Activated CD4-positive, alpha-beta memory T cell treated with anti-CD3 and anti-CD28 coated beads, Interleukin-2, amount 10 ng/mL, durations not matched to agents 7 days and 5 days (primary cell): ENCODE measurements at regions of chr4 and their contacts with region 1.

Region 1: DNA sequence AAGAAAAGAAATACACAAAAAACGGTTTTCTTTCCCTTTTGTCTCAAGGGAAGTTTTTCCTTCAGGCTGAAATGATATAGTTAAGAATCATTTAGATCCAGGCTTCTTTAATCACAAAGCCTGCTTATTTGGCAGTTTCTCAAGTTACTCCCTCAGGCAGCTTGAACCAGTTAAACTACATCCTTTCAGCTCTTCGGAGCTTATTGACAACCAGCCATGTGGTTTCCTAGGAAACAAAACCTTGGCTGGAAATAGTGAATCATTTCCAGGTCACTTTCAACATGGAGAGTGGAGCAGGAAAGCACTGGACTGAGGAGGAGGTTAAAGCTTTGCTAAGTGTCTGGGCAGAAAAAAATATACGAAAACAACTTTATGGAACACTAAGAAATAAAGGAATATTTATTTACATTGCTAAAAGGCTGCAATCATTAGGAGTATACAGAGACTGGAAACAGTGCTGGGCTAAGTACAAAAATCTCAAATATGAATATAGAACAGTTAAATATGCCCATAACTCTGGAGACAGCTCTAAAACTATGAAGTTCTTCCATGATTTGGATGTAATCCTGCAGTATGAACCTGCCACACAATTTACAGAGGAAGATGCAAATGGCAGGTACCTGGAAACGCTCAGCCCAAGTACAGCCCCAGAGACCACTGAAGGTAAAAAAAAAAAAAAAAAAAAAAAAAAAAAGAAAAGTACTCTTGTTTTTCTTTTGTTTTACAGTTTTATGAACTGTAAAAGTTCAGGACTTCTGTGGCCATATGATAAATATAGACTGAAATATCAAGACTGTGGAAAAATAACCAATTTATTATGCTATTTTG is 23.2 kb upstream of the AASDH start:
- DNase-seq: no peak
- H3K4me3 Mint-ChIP-seq: no peak overlapping the region
- H3K27ac Mint-ChIP-seq: no peak overlapping the region
- H3K4me1 Mint-ChIP-seq: peaks cover 26% of the 10 kb centered on the region
- H3K27me3 Mint-ChIP-seq: no peaks in the 10 kb centered on the region

Region 2: DNA sequence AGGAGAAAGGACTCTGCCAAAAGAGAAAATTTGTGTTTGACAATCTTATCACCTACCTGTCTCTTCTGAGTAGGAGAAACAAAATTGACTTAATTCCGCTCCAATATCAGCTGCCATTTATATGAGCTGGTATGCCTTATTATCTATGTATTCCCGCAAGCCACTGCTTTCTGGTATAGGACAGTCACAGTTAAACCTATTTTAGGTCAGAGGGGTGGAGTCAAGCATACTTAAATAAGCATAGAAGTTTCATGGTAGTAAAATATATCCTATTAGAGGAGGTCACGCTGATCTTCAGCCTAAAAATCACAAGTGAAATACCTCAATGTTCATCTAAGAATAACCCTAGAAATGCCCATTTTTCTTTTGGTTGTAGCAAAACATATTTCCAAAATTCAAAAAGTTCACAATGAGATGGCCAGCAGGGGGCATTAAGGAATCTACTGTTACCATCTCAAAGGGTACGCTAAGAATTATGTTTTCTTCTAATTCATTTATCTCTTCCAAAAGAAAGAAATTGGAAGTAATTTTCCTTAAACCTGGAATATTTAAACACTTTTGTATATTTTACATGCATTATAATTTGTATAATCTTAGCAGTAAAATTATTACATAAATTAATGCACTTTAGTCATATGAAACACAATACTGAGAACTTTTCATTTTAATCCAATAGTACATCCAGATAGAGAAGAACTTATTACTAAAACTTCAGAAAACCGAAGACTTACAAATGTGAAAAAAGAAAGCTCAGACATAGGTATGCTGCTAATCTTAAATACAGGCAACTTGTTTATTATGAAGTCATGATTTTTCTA is 14.5 kb after region 1 on chr4:
- CTCF ChIA-PET with region 1: interaction called, 12 read pairs
- POLR2A ChIA-PET with region 1: interaction called, 3 read pairs
- DNase-seq: peak; percentile 32
- H3K4me3 Mint-ChIP-seq: no peak overlapping the region
- H3K27ac Mint-ChIP-seq: no peak overlapping the region
- H3K4me1 Mint-ChIP-seq: peaks cover 17% of the 10 kb centered on the region
- H3K27me3 Mint-ChIP-seq: no peaks in the 10 kb centered on the region

Region 3: DNA sequence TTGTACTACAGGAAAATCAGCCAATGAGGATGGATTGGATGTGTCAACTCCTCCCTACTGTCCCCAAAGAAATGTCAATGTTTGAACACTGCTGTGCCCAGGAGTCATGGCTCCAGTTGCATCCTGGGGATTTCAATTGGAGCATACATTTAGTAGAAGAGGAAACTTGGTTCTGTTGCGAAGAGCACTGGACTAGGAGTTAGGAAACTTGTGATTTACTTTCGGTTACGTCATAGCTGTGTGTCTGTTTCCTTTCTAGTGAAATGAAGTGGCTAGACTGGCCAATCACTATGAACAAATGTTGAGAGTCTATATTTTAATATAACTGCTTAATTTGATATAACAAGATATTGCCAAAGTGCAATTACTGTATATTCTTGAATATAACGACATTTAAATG is 130.4 kb after region 1 on chr4:
- CTCF ChIA-PET with region 1: no interaction called
- POLR2A ChIA-PET with region 1: no interaction called
- DNase-seq: no peak
- H3K4me3 Mint-ChIP-seq: no peak overlapping the region
- H3K27ac Mint-ChIP-seq: no peak overlapping the region
- H3K4me1 Mint-ChIP-seq: peaks cover 13% of the 10 kb centered on the region
- H3K27me3 Mint-ChIP-seq: peaks cover 21% of the 10 kb centered on the region